ENCODE measurements at regions of chr4 and their contacts with region 1.

Region 1: DNA sequence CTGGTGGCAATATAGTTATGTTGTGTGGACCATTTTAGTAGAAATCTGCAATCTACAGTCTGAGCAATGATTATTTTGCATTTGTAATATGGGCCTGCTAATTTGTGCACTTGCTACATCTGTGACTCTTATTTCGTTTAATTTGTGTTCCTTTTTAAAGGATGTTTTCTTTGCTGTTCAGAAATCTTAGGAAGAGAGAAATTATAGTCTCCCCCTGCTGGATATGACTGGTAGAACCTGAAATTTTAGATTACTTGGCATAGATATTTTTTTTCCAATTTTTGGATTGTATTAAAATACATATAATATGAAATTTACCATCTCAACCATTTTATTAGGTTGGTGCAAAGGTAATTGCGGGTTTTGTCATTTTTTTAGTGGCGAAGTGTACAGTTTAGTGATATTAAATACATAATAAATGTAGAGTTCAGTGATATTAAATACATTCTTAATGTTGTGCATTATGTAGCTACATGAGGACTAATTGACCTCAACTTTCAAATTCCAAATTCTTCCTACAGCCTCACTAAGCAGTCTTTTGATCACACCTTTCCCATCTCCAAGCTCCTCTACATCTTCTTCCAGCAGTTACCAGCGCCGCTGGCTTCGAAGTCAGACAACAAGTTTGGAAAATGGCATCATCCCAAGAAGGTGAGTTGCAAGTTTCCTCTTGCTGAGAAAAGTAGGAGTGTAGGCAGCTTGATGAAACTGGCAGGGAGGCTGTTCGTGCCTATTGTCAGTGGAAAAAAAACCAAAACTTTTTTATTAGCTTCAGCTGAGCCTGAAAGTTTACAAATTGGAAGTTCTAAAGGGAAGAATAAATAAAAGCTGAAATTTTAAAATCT is 82.2 kb downstream of the FNIP2 start:
- DNase-seq: no peak
- H3K4me3 Mint-ChIP-seq: no peak overlapping the region
- H3K27ac Mint-ChIP-seq: no peak overlapping the region
- H3K4me1 Mint-ChIP-seq: peaks cover 6% of the 10 kb centered on the region
- H3K27me3 Mint-ChIP-seq: no peaks in the 10 kb centered on the region

Region 2: DNA sequence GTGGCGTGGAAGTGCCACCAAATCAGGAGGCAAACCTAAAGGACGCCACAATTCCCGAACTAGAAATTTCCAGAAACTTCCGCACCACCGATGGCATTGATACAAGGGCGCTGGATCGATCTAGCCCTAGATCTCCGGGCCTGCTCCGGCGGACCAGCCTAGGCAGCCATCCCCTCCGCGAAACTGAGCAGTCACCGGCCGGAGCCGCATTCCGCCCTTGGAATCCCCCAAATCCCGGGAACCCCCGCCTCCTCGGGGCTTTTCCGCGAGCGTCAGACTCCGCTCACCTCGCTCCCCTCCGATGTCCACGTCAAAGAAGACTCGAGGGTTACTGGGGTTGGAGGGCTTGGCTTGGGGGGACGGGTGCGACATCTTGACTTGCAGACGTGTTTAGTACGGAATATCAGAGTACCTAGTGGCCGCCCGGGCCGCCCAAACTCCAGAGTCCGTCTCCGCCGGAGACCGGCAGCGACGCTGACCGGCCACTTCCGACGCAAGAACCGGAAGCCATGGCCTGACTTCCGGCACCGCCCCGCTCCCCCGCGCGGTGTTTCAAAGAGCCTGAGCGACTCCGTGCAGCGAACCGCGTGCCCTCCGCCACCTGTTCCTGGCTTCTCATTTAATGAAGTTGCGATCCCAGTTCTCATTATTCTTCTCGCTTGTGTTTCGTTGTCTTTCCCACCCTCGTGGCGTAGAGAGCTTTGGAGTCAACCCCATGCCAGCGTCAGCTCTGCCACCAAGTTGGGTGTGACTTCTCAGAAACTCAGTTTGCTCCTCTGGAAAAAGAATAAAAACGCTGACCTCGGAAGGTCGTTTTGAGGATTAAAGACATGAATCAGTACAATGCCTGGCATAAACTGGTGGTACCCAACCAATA is 127.9 kb before region 1 on chr4 and contains the start of gene PPID:
- CTCF ChIA-PET with region 1: interaction called, 10 read pairs
- DNase-seq: peak; percentile 88
- H3K4me3 Mint-ChIP-seq: peak within 1 kb of the TSS; percentile 97
- H3K27ac Mint-ChIP-seq: peak within 1 kb of the TSS; percentile 98
- H3K4me1 Mint-ChIP-seq: peaks cover 46% of the 10 kb centered on the region
- H3K27me3 Mint-ChIP-seq: no peaks in the 10 kb centered on the region

Region 3: DNA sequence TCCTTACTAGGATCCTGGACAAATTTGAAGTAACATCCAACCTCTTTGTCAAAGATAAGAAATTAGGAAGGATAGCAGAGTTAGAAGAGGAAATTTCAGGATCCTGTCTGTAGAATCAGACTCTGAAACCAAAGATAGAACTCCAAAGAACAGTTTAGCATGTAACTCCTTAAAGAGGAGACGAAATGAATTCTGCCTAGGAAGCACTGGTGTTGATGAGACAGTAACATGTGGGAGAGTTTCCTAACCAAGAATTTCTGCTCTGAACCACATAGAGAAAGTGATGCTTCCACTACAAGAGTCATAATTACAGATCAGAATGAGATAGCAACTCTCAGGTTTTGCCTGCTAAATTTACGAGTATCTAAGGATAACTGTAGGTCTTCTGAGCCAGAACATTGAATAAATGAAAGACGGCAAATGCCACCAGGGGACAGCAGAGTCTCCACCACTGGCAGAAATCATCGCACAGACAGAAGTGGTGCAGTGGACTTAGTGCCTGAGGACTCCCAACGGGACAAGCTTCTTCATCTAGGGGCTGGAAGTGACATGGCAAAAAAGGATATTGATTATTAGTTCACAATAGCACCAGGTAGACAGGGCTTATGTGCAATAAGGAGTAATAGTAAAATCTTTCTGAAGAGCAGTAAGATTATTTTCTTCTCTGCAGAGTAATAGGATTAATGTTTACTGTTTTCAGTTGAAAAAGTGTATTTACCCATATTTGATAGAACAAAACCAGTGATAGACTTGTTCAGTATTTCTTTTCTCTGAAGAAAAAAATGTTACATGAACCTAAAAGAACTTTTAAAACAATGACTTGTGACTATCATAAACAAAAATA is 121.1 kb before region 1 on chr4:
- CTCF ChIA-PET with region 1: interaction called, 19 read pairs
- DNase-seq: peak; percentile 66
- H3K4me3 Mint-ChIP-seq: no peak overlapping the region
- H3K27ac Mint-ChIP-seq: no peak overlapping the region
- H3K4me1 Mint-ChIP-seq: peaks cover 16% of the 10 kb centered on the region
- H3K27me3 Mint-ChIP-seq: peaks cover 23% of the 10 kb centered on the region

Region 4: GRCh38 chr4:158782551-158783360 is 68.3 kb before region 1 on chr4:
- CTCF ChIA-PET with region 1: interaction called, 13 read pairs
- DNase-seq: no peak
- H3K4me3 Mint-ChIP-seq: no peak overlapping the region
- H3K27ac Mint-ChIP-seq: no peak overlapping the region
- H3K4me1 Mint-ChIP-seq: peaks cover 21% of the 10 kb centered on the region
- H3K27me3 Mint-ChIP-seq: no peaks in the 10 kb centered on the region

Region 5: GRCh38 chr4:159191989-159192388 is 341.0 kb after region 1 on chr4:
- CTCF ChIA-PET with region 1: interaction called, 12 read pairs
- DNase-seq: no peak
- H3K4me3 Mint-ChIP-seq: no peak overlapping the region
- H3K27ac Mint-ChIP-seq: no peak overlapping the region
- H3K4me1 Mint-ChIP-seq: no peaks in the 10 kb centered on the region
- H3K27me3 Mint-ChIP-seq: no peaks in the 10 kb centered on the region

Region 6: GRCh38 chr4:159201168-159201567 is 350.1 kb after region 1 on chr4:
- CTCF ChIA-PET with region 1: interaction called, 41 read pairs
- DNase-seq: no peak
- H3K4me3 Mint-ChIP-seq: no peak overlapping the region
- H3K27ac Mint-ChIP-seq: no peak overlapping the region
- H3K4me1 Mint-ChIP-seq: peaks cover 17% of the 10 kb centered on the region
- H3K27me3 Mint-ChIP-seq: no peaks in the 10 kb centered on the region

Measured in activated naive CD4-positive, alpha-beta T cell treated with anti-CD3 and anti-CD28 coated beads, Interleukin-2, amount 10 ng/mL, durations not matched to agents 7 days and 5 days (primary cell).